ENCODE measurements at regions of chr2 and their contacts with region 1.

Region 1: GRCh38 chr2:46995844-46996243 is 80.2 kb upstream of the MCFD2 start:
- DNase-seq: no peak
- ATAC-seq: no peak

Region 2: GRCh38 chr2:46950314-46950713 is 45.5 kb before region 1 on chr2:
- intact Hi-C with region 1: loop called (anchors 1 kb)
- DNase-seq: no peak
- ATAC-seq: peak; percentile 35

Region 3: DNA sequence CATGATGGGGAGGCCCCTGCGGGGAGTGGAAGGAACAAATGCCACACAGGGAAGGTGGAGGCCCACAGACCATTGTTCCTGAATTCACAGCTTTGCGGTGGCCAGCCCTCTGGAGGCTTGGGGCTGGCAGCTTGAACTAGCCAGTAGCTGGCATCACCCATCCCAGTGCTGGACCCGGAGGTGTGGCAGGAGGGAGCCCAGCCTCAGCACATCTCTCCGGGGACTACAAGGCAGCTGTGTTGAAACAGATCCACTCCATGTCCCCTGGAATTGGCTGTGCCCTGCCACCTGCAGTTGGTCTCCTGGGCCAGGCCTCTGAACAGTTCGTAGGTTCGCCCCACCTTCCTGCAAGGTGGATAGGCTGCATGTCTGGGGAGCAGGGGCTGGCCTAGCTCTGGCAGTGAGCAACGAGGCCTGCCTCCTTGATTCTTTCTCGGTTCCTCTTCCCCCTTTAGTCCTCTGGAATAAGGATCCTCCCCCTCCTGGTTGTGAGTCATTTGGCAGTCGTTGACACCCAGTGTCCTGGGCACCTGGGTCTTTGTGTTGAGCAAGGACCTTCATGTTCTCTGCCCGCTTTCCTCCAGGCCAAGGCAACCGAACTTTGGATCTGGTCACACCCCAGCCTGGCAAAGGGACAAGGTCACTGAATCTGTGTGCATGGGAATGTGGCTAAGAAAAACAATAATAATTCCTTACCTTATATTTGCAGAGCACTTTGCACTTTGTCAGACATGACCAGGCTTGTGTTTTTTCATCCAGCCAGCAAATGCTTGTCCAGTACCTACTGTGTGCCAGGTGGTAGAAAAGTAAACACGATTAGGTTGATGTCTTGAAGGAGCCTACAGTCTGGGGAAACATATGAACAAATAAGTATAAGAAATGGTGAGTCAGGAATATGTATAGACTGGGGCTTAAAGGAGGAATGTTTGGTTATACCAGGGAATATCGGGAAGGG is 25.2 kb before region 1 on chr2:
- intact Hi-C with region 1: no loop called
- DNase-seq: no peak
- ATAC-seq: peak; percentile 23

Measured in sciatic nerve (tissue), 2 donors.